ENCODE measurements at regions of chr11 and their contacts with region 1.

Region 1: GRCh38 chr11:61161190-61162091 is at the start of gene VPS37C:
- DNase-seq: peak; percentile 98
- H3K4me3 Mint-ChIP-seq: peak within 1 kb of the TSS; percentile 90
- H3K27ac Mint-ChIP-seq: peak within 1 kb of the TSS; percentile 89
- H3K4me1 Mint-ChIP-seq: peaks cover 49% of the 10 kb centered on the region
- H3K27me3 Mint-ChIP-seq: no peaks in the 10 kb centered on the region
- total RNA-seq, gene VPS37C: 13.3 and 13.7 TPM in 2 replicates

Region 2: GRCh38 chr11:60841797-60842667 is 319.4 kb before region 1 on chr11 and contains the start of gene CCDC86:
- intact Hi-C with region 1: loop called (anchors 1 kb)
- DNase-seq: peak; percentile 100
- H3K4me3 Mint-ChIP-seq: peak within 1 kb of the TSS; percentile 95
- H3K27ac Mint-ChIP-seq: peak within 1 kb of the TSS; percentile 95
- H3K4me1 Mint-ChIP-seq: peaks cover 36% of the 10 kb centered on the region
- H3K27me3 Mint-ChIP-seq: no peaks in the 10 kb centered on the region
- total RNA-seq, gene CCDC86: 90.0 and 91.3 TPM in 2 replicates

Region 3: DNA sequence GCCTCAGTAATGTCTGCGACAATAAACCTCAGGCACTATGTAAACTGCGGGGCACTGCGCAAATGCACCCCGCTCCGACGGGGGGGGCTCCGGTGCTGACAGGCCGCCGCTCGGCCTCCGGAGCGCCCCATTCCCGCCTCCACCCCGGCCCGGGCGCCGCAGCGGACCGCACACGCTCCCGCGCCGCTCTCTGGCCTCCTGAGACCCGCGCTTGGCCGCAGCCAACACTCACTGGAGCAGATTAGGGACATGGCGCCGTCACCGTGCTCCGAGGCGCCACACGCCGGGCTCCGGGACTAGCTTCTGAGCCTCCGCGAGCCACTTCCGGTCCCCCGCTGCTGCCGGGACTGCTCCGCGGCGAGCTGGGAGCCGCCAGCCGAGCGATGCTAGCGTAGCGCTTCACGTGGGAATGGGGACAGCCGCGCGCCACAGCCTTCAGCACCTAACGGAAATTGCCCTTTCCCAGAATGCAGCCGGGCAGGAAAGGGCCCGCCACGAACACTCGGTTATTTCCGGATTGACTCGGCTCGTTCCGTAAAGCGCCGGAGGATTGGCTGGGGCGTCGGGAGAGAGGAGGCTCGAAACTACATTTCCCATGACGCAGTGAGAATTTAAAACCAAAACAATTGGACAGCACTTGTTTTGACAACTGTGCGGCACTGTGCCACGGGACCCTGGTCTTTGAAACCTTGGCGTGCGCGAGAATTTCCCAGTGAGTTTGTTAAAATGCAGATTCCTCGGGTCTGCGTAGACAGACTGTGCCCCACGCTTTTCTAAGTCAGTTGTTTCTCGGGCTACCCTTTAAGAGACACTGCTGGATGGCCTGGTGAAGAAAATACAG is 255.1 kb before region 1 on chr11 and contains the start of gene PRPF19:
- intact Hi-C with region 1: loop called (anchors 2 kb)
- DNase-seq: peak; percentile 100
- H3K4me3 Mint-ChIP-seq: peak within 1 kb of the TSS; percentile 91
- H3K27ac Mint-ChIP-seq: peak within 1 kb of the TSS; percentile 92
- H3K4me1 Mint-ChIP-seq: peaks cover 29% of the 10 kb centered on the region
- H3K27me3 Mint-ChIP-seq: peaks cover 5% of the 10 kb centered on the region
- total RNA-seq, gene PRPF19: 219 TPM in 2 replicates

Region 4: GRCh38 chr11:61187505-61188130 is 26.2 kb after region 1 on chr11:
- intact Hi-C with region 1: loop called (anchors 2 kb)
- DNase-seq: peak; percentile 93
- H3K4me3 Mint-ChIP-seq: no peak overlapping the region
- H3K27ac Mint-ChIP-seq: no peak overlapping the region
- H3K4me1 Mint-ChIP-seq: peaks cover 2% of the 10 kb centered on the region
- H3K27me3 Mint-ChIP-seq: peaks cover 6% of the 10 kb centered on the region

Measured in activated CD4-positive, alpha-beta T cell treated with anti-CD3 and anti-CD28 coated beads, Interleukin-2, amount 10 ng/mL, durations not matched to agents 24 days and 14 days (primary cell).